Activated CD4-positive, alpha-beta memory T cell treated with anti-CD3 and anti-CD28 coated beads for 36 hours (primary cell): ENCODE measurements at regions of chr7 and their contacts with region 1.

Region 1: DNA sequence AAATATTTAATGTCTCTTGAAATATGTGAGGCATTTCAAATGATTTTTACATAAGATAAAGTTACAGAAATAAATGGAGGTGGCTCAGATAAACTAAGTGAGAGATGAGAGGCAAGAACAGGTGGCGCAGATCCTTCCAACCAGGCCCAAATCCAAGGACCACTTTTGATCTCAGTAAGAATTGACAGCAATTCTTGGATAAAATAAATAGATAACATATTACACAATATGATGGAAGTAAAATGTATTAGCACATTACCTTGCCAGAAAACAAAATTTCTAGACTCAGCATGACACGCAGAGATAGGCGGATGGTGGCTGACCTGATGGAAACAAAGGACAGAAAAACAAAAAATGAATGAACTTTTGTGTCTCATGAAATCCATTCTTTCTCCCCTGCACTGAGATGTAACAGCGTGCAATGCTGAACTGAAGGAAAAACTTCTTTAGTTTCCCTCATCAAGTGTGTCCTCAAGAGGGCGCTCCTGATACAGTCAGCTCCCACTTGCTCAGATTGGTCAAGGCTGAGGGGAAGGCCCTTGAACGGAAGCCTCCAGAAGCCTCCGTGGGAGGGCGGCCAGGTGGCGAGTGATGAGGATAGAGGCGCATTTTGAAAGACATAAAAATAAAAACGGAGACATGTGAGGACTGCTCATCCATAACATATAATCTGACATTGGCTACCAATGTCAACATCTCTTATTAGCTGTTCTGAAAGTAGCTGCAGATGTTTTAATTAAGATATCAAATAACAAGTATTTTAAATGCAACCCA is 62.8 kb upstream of the GSDME start:
- DNase-seq: peak; percentile 84
- H3K4me3 Mint-ChIP-seq: peak overlapping the region; percentile 62
- H3K27ac Mint-ChIP-seq: peak overlapping the region; percentile 95
- H3K4me1 Mint-ChIP-seq: peaks cover 33% of the 10 kb centered on the region
- H3K27me3 Mint-ChIP-seq: no peaks in the 10 kb centered on the region

Region 2: GRCh38 chr7:24572997-24573625 is 247.0 kb before region 1 on chr7 and contains the start of gene PALS2:
- CTCF ChIA-PET with region 1: no interaction called
- POLR2A ChIA-PET with region 1: no interaction called
- intact Hi-C with region 1: loop called (anchors 10 kb)
- DNase-seq: peak; percentile 82
- H3K4me3 Mint-ChIP-seq: peak within 1 kb of the TSS; percentile 83
- H3K27ac Mint-ChIP-seq: peak within 1 kb of the TSS; percentile 70
- H3K4me1 Mint-ChIP-seq: peaks cover 28% of the 10 kb centered on the region
- H3K27me3 Mint-ChIP-seq: peaks cover 3% of the 10 kb centered on the region
- total RNA-seq, gene PALS2: 21.0 to 22.9 TPM

Region 3: DNA sequence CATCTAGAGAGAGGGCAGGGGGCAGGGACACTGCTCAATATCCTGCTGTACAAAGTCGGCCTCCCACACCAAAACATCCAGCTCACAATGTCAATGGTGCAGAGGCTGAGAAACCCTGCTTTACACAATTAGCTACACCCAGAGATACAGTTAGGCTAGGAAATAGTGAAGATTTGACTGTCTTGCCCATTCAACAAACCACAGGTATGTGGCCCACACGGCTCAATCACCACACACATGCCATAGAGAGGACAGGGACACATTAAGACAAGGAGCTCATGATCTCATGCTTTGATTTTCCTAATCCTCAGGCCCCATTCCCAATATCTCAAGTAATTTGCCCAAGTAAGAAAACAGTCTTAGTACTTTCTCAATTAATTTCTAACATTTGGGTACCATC is 49.5 kb after region 1 on chr7:
- CTCF ChIA-PET with region 1: interaction called, 7 read pairs
- POLR2A ChIA-PET with region 1: interaction called, 4 read pairs
- intact Hi-C with region 1: loop called (anchors 1 kb)
- DNase-seq: no peak
- H3K4me3 Mint-ChIP-seq: no peak overlapping the region
- H3K27ac Mint-ChIP-seq: no peak overlapping the region
- H3K4me1 Mint-ChIP-seq: peaks cover 39% of the 10 kb centered on the region
- H3K27me3 Mint-ChIP-seq: no peaks in the 10 kb centered on the region

Region 4: GRCh38 chr7:24898691-24899090 is 78.6 kb after region 1 on chr7:
- CTCF ChIA-PET with region 1: interaction called, 4 read pairs
- POLR2A ChIA-PET with region 1: no interaction called
- intact Hi-C with region 1: loop called (anchors 1 kb)
- DNase-seq: no peak
- H3K4me3 Mint-ChIP-seq: no peak overlapping the region
- H3K27ac Mint-ChIP-seq: peak overlapping the region; percentile 67
- H3K4me1 Mint-ChIP-seq: peaks cover 79% of the 10 kb centered on the region
- H3K27me3 Mint-ChIP-seq: no peaks in the 10 kb centered on the region

Region 5: GRCh38 chr7:24965831-24966709 is 146.0 kb after region 1 on chr7:
- CTCF ChIA-PET with region 1: interaction called, 9 read pairs
- POLR2A ChIA-PET with region 1: no interaction called
- intact Hi-C with region 1: loop called (anchors 1 kb)
- DNase-seq: peak; percentile 61
- H3K4me3 Mint-ChIP-seq: peak overlapping the region; percentile 36
- H3K27ac Mint-ChIP-seq: peak overlapping the region; percentile 80
- H3K4me1 Mint-ChIP-seq: peaks cover 82% of the 10 kb centered on the region
- H3K27me3 Mint-ChIP-seq: no peaks in the 10 kb centered on the region

Region 6: DNA sequence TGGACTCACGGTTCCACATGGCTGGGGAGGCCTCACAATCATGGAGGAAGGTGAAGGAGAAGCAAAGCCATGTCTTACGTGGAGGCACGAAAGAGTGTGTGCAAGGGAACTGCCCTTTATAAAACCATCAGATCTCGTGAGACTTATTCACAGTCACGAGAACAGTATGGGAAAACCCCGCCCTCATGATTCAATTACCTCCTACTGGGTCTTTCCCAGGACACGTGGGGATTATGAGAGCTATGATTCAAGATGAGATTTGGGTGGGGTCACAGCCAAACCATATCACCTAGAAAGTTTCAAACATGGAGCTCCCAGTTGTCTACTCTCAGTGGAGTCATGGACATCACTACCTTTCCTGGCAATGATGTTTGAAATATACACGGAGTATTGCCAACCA is 255.4 kb after region 1 on chr7:
- CTCF ChIA-PET with region 1: interaction called, 50 read pairs
- POLR2A ChIA-PET with region 1: no interaction called
- intact Hi-C with region 1: loop called (anchors 1 kb)
- DNase-seq: peak; percentile 53
- H3K4me3 Mint-ChIP-seq: no peak overlapping the region
- H3K27ac Mint-ChIP-seq: no peak overlapping the region
- H3K4me1 Mint-ChIP-seq: peaks cover 13% of the 10 kb centered on the region
- H3K27me3 Mint-ChIP-seq: no peaks in the 10 kb centered on the region